ENCODE measurements at regions of chr2 and their contacts with region 1.

Region 1: GRCh38 chr2:231612179-231613053 is 19.8 kb downstream of the TEX44 start:
- DNase-seq: peak; percentile 79 to 92
- ATAC-seq: peak; percentile 68 to 79
- H3K4me3 ChIP-seq: peak overlapping the region in 2 of 4 donors; percentile 16 to 65
- H3K27ac ChIP-seq: peak overlapping the region; percentile 85 to 95 (median 89)
- H3K4me1 ChIP-seq: peaks cover 32 to 38% of the 10 kb centered on the region in 2 donors
- H3K27me3 ChIP-seq: no peaks in the 10 kb centered on the region
- CTCF ChIP-seq: peak; percentile 97 to 99 (median 98)
- POLR2A ChIP-seq: peak in 1 of 2 donors; percentile 13

Region 2: GRCh38 chr2:231642631-231643494 is 30.4 kb after region 1 on chr2:
- in situ Hi-C with region 1: no loop called
- intact Hi-C with region 1: loop called (anchors 1 kb)
- DNase-seq: peak; percentile 94 to 97
- ATAC-seq: peak; percentile 82 to 84
- H3K4me3 ChIP-seq: peak overlapping the region; percentile 9 to 43 (median 28)
- H3K27ac ChIP-seq: peak overlapping the region; percentile 93 to 99 (median 96)
- H3K4me1 ChIP-seq: peaks cover 51 to 52% of the 10 kb centered on the region in 2 donors
- H3K27me3 ChIP-seq: no peaks in the 10 kb centered on the region
- CTCF ChIP-seq: no peak
- POLR2A ChIP-seq: peak; percentile 89 to 93

Region 3: GRCh38 chr2:231662028-231662810 is 49.8 kb after region 1 on chr2:
- in situ Hi-C with region 1: loop called in 1 of 4 experiments (anchors 5 kb)
- intact Hi-C with region 1: loop called (anchors 2 kb)
- DNase-seq: peak; percentile 90 to 94
- ATAC-seq: peak; percentile 70 to 74
- H3K4me3 ChIP-seq: peak overlapping the region; percentile 56 to 81 (median 66)
- H3K27ac ChIP-seq: peak overlapping the region; percentile 86 to 100 (median 98)
- H3K4me1 ChIP-seq: peaks cover 15 to 22% of the 10 kb centered on the region in 2 donors
- H3K27me3 ChIP-seq: no peaks in the 10 kb centered on the region
- CTCF ChIP-seq: peak in 2 of 5 experiments; percentile 42 to 45
- POLR2A ChIP-seq: peak; percentile 48 to 66

Region 4: GRCh38 chr2:231674587-231675338 is 62.3 kb after region 1 on chr2:
- in situ Hi-C with region 1: loop called (anchors 5 kb)
- intact Hi-C with region 1: loop called (anchors 1 kb)
- DNase-seq: peak in 1 of 2 donors; percentile 61
- ATAC-seq: peak; percentile 35 to 55
- H3K4me3 ChIP-seq: no peak overlapping the region
- H3K27ac ChIP-seq: peak overlapping the region; percentile 79 to 83 (median 81)
- H3K4me1 ChIP-seq: peaks cover 24 to 28% of the 10 kb centered on the region in 2 donors
- H3K27me3 ChIP-seq: no peaks in the 10 kb centered on the region
- CTCF ChIP-seq: peak; percentile 79 to 92 (median 92)
- POLR2A ChIP-seq: no peak

Region 5: DNA sequence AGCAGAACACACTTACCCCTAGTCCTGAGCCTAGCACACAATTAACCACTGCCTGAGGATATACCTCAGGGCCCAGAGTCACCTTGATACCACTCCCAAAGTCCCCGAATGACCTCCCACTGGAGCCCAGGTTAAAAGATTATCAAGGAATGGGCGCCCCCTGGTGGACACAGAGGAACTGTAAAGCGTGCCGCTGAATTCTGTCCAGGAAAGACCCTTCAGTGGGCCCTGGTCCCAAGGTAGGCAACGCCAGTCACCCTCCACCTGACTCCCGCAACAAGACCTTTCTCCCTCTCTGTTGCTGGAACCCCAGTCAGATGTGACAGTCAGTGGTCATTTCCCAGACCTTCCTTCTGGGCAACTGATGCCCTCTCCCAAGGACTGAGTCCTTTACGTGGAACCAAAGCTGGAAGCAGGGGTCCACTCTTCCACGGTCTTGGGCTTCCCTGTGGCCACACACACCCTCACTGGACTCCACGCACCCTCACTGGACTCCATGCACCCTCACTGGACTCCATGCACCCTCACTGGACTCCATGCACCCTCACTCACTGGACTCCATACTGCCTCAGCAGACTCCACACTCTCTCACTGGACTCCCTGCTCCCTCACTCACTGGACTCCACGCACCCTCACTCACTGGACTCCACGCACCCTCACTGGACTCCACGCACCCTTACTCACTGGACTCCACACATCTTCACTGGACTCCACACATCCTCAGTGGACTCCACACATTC is 103.0 kb after region 1 on chr2:
- in situ Hi-C with region 1: loop called (anchors 5 to 10 kb)
- intact Hi-C with region 1: loop called (anchors 1 kb)
- DNase-seq: peak; percentile 28 to 62
- ATAC-seq: peak in 1 of 2 donors; percentile 19
- H3K4me3 ChIP-seq: no peak overlapping the region
- H3K27ac ChIP-seq: peak overlapping the region in 3 of 4 donors; percentile 72 to 100 (median 77)
- H3K4me1 ChIP-seq: peaks cover 39% of the 10 kb centered on the region in 2 donors
- H3K27me3 ChIP-seq: no peaks in the 10 kb centered on the region
- CTCF ChIP-seq: peak; percentile 88 to 97 (median 92)
- POLR2A ChIP-seq: no peak

Region 6: DNA sequence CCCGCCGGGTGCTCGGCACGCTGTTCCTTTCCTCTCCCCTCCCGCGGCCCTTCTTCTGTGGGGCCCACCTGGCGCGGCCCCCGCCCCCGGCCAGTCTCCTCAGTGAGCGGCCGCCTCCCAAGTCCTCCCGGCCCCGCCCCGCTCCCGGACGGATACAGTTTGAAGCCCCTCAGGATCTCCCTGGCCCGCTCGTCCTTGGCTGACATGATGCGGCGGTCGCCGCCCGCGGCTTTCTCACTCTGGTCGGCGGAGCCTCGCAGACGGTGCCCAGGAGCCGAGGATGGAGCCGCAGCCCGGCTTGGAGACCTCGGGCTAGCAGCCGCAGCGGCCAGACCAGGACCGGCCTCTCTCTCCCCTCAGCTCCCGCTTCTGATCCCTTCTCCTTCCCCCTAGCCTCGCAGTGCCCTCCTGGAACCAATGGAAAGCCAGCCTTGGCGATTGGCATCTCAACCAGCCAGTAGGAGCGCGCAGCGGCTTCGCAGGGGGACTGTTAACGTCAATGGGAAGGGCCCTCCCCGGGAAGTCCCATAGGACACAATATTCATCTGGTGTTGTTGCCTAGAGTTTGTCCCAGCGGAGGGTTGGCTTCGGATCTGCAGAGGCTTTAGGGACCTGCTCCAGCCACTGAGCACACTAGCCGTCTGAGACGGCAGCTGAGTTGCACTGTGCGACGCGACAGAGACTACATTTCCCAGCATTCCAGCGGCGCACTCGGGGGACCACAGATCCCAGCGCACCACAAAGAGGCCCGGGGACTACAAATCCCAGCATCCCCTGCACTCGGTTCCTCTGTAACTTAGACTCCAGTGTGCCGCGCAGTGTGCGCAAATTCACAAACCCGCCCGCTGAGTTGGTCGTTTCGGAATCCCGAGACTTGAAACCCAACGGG is 168.7 kb after region 1 on chr2 and contains the start of gene PDE6D:
- in situ Hi-C with region 1: no loop called
- intact Hi-C with region 1: loop called (anchors 5 kb)
- DNase-seq: peak; percentile 97 to 99
- ATAC-seq: peak; percentile 98 to 99
- H3K4me3 ChIP-seq: peak within 1 kb of the TSS; percentile 75 to 99 (median 92)
- H3K27ac ChIP-seq: peak within 1 kb of the TSS; percentile 84 to 91 (median 90)
- H3K4me1 ChIP-seq: peaks cover 34 to 44% of the 10 kb centered on the region in 2 donors
- H3K27me3 ChIP-seq: no peaks in the 10 kb centered on the region
- CTCF ChIP-seq: no peak
- POLR2A ChIP-seq: peak; percentile 90 to 97
- total RNA-seq, gene PDE6D: 11.7 to 22.6 (median 17.6) TPM